ENCODE measurements at regions of chr1 and their contacts with region 1.

Region 1: DNA sequence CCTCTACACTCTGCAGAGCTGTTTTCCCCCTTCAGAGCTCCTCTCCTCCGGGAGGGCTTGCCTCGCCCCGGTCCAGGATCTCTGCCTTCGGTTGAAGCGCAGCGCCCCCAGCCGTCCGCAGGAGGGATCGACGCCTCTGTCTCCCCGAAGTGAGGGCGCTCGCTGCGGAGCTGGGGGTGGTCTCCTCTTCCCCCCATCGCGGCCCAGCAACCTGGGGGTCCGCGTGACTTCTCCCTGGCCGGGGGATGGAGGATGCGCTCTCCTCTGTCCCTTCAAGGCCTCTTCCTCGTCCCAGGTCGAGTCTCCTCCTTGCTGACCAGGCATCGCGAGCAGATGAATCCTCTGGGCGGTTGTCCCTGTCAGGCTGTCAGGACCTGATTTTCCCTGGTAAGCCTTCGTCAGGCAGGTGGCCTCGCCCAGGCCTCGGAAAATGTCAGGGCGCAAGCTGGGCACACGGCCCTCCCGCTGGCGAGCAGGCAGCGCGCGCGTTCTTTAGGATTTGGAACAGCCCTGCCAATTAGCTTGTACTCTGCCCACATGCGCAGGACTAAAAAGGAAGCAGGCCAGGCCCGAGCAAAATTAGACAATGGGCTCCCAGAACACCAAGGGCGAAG is 90.5 kb downstream of the EDEM3 start:
- DNase-seq: peak; percentile 63
- H3K4me3 Mint-ChIP-seq: no peak overlapping the region
- H3K27ac Mint-ChIP-seq: no peak overlapping the region
- H3K4me1 Mint-ChIP-seq: peaks cover 3% of the 10 kb centered on the region
- H3K27me3 Mint-ChIP-seq: peaks cover 17% of the 10 kb centered on the region

Region 2: DNA sequence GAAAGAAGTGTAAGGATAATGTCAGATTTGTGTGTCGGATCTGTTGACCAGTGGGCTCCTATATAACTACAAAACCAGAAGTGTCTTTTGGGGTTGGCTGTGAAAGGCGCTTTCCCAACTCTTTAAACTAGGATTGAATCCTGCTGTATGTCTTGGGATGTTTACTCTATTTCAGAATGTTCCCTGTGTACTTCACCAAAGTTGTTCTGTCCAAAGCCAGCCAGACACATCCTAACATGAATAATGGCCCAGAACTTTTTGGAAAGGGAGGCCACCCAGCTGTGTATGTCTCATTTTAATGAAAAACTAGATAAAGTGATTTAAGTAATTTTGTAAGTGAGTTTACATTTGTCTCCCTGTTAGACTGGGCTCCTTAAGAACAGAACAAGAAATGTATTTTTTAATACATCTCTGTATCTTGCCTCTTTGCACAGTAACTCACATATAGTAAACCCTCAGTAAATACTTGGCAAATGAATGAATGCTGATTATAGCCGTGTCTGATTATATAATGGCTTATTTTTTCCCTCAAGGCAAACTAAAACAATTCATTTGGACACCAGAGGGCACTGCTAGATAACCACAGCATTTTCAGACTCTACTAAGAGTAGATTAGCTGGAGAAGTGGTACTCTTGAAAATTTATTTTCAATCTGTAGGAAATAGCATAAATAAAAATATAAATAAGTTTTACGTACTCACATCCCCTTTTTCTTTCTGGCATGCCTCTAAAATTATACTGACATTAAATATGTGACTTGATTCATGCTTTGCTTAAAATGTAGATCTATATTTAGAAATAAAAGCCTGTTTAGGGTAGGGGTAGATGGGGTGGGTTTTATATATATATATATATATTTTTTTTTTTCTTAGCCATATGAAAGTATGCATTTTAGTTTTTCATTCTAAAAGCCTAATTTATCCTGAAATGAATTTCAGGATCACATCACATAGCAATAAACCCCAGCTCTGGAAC is 588.8 kb before region 1 on chr1:
- CTCF ChIA-PET with region 1: interaction called, 5 read pairs
- POLR2A ChIA-PET with region 1: no interaction called
- intact Hi-C with region 1: loop called (anchors 2 kb)
- DNase-seq: no peak
- H3K4me3 Mint-ChIP-seq: no peak overlapping the region
- H3K27ac Mint-ChIP-seq: no peak overlapping the region
- H3K4me1 Mint-ChIP-seq: peaks cover 11% of the 10 kb centered on the region
- H3K27me3 Mint-ChIP-seq: no peaks in the 10 kb centered on the region

Region 3: GRCh38 chr1:184222652-184223052 is 441.5 kb before region 1 on chr1:
- CTCF ChIA-PET with region 1: interaction called, 8 read pairs
- POLR2A ChIA-PET with region 1: no interaction called
- intact Hi-C with region 1: loop called (anchors 10 kb)
- DNase-seq: peak; percentile 47
- H3K4me3 Mint-ChIP-seq: no peak overlapping the region
- H3K27ac Mint-ChIP-seq: no peak overlapping the region
- H3K4me1 Mint-ChIP-seq: no peaks in the 10 kb centered on the region
- H3K27me3 Mint-ChIP-seq: no peaks in the 10 kb centered on the region

Region 4: DNA sequence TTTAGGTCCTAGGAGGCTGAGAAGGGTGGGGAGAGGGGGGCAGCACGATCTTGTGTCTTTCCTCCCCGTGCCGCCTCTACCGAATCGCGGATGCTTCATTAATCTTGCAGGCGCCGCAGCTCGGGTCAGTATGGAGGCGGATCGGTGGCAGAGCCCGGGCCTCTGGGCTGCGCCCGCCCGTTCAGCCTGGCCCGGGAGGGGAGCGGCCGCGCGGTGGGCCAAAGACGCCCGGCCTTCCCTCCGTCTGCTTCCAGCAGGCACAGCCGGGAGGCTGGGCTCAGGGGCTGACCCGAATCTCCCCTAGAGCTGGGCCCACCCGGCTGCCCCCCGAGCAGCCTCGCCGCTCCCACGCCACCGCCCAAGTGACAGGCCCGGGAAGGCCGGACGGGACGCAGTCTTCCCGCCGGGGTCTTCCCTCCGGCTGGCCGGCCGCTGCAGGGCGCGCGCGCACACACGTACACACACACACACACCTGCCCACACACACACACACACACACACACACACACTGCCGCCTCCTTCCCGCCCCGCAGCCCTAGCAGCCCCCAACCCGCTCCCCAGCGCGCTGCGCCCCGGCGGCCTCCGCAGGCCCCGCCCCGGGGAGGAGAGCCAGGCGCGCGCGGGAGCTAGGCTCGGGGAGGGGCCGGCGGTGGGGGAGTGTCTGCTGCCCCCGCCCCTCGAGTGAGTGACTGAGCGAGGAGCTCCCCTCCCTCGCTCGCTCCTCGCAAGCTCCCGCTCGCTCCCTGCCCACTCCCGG is 277.7 kb before region 1 on chr1 and contains the start of gene C1orf21:
- CTCF ChIA-PET with region 1: no interaction called
- POLR2A ChIA-PET with region 1: no interaction called
- intact Hi-C with region 1: loop called (anchors 2 kb)
- DNase-seq: peak; percentile 82
- H3K4me3 Mint-ChIP-seq: peak within 1 kb of the TSS; percentile 74
- H3K27ac Mint-ChIP-seq: no peak within 1 kb of the TSS
- H3K4me1 Mint-ChIP-seq: peaks cover 15% of the 10 kb centered on the region
- H3K27me3 Mint-ChIP-seq: peaks cover 69% of the 10 kb centered on the region
- total RNA-seq, gene C1orf21: 1.9 to 2.2 TPM

Measured in activated CD4-positive, alpha-beta memory T cell treated with anti-CD3 and anti-CD28 coated beads for 36 hours (primary cell).